ENCODE measurements at regions of chrX and their contacts with region 1.

Region 1: DNA sequence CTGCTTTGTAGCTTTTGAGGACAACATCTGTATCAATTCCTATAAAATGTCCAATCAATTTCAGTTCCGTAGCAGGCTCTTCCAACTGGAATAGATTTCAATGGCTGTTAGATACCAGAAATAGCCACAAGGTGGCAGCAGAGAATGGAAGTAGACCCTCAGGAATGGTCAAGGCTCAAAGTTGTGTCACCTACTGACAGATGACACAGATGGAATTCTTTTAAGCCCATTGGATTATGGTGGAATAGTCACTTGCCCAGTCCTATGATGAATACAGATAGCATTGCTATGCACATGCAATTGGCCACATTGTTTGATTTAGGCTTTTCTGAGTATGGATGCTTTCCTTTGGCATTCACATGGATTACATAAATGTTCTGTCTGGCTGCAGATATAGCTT is 130.4 kb upstream of the RADX start:
- DNase-seq: peak; percentile 81
- H3K4me3 Mint-ChIP-seq: no peak overlapping the region
- H3K27ac Mint-ChIP-seq: no peak overlapping the region
- H3K4me1 Mint-ChIP-seq: peaks cover 16% of the 10 kb centered on the region
- H3K27me3 Mint-ChIP-seq: no peaks in the 10 kb centered on the region

Region 2: GRCh38 chrX:106457802-106458201 is 23.5 kb before region 1 on chrX:
- intact Hi-C with region 1: loop called (anchors 2 kb)
- DNase-seq: no peak
- H3K4me3 Mint-ChIP-seq: no peak overlapping the region
- H3K27ac Mint-ChIP-seq: no peak overlapping the region
- H3K4me1 Mint-ChIP-seq: no peaks in the 10 kb centered on the region
- H3K27me3 Mint-ChIP-seq: peaks cover 1% of the 10 kb centered on the region

Region 3: GRCh38 chrX:106611679-106612392 is 130.5 kb after region 1 on chrX and contains the start of gene RADX:
- intact Hi-C with region 1: loop called (anchors 1 kb)
- DNase-seq: peak; percentile 95
- H3K4me3 Mint-ChIP-seq: peak within 1 kb of the TSS; percentile 93
- H3K27ac Mint-ChIP-seq: peak within 1 kb of the TSS; percentile 83
- H3K4me1 Mint-ChIP-seq: peaks cover 16% of the 10 kb centered on the region
- H3K27me3 Mint-ChIP-seq: no peaks in the 10 kb centered on the region
- total RNA-seq, gene RADX: 5.7 and 7.4 TPM in 2 replicates

Region 4: GRCh38 chrX:106791495-106791894 is 310.2 kb after region 1 on chrX:
- intact Hi-C with region 1: loop called (anchors 1 kb)
- DNase-seq: peak; percentile 52
- H3K4me3 Mint-ChIP-seq: no peak overlapping the region
- H3K27ac Mint-ChIP-seq: no peak overlapping the region
- H3K4me1 Mint-ChIP-seq: no peaks in the 10 kb centered on the region
- H3K27me3 Mint-ChIP-seq: peaks cover 2% of the 10 kb centered on the region